ENCODE measurements at regions of chr22 and their contacts with region 1.

Region 1: GRCh38 chr22:20873214-20873613 is 14.4 kb downstream of the SNAP29 start:
- DNase-seq: no peak
- ATAC-seq: no peak
- H3K4me3 ChIP-seq: no peak overlapping the region
- H3K27ac ChIP-seq: no peak overlapping the region
- H3K4me1 ChIP-seq: peaks cover 19% of the 10 kb centered on the region
- H3K27me3 ChIP-seq: no peaks in the 10 kb centered on the region
- CTCF ChIP-seq: no peak
- EP300 ChIP-seq: no peak
- POLR2A ChIP-seq: no peak
- RAD21 ChIP-seq: no peak

Region 2: GRCh38 chr22:20810645-20811044 is 62.6 kb before region 1 on chr22:
- CTCF ChIA-PET with region 1: no interaction called
- POLR2A ChIA-PET with region 1: no interaction called
- in situ Hi-C with region 1: loop called (anchors 10 kb)
- intact Hi-C with region 1: no loop called
- DNase-seq: no peak
- ATAC-seq: no peak
- H3K4me3 ChIP-seq: no peak overlapping the region
- H3K27ac ChIP-seq: no peak overlapping the region
- H3K4me1 ChIP-seq: no peaks in the 10 kb centered on the region
- H3K27me3 ChIP-seq: no peaks in the 10 kb centered on the region
- CTCF ChIP-seq: no peak
- EP300 ChIP-seq: no peak
- POLR2A ChIP-seq: no peak
- RAD21 ChIP-seq: no peak